B cell (primary cell): ENCODE measurements at regions of chr13 and their contacts with region 1.

Region 1: DNA sequence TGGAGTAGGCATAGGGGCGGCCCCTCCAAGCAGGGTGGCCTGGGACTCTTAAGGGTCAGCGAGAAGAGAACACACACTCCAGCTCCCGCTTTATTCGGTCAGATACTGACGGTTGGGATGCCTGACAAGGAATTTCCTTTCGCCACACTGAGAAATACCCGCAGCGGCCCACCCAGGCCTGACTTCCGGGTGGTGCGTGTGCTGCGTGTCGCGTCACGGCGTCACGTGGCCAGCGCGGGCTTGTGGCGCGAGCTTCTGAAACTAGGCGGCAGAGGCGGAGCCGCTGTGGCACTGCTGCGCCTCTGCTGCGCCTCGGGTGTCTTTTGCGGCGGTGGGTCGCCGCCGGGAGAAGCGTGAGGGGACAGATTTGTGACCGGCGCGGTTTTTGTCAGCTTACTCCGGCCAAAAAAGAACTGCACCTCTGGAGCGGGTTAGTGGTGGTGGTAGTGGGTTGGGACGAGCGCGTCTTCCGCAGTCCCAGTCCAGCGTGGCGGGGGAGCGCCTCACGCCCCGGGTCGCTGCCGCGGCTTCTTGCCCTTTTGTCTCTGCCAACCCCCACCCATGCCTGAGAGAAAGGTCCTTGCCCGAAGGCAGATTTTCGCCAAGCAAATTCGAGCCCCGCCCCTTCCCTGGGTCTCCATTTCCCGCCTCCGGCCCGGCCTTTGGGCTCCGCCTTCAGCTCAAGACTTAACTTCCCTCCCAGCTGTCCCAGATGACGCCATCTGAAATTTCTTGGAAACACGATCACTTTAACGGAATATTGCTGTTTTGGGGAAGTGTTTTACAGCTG is at the starts of genes BRCA2 and ZAR1L:
- DNase-seq: peak; percentile 94
- ATAC-seq: peak; percentile 90
- H3K4me3 ChIP-seq: peak within 1 kb of the TSS; percentile 74 to 91 (median 82)
- H3K4me3 Mint-ChIP-seq: peak within 1 kb of the TSS; percentile 91
- H3K27ac ChIP-seq: peak within 1 kb of the TSS; percentile 99 to 100
- H3K27ac Mint-ChIP-seq: peak within 1 kb of the TSS; percentile 99
- H3K4me1 ChIP-seq: peaks cover 7 to 20% of the 10 kb centered on the region in 2 donors
- H3K4me1 Mint-ChIP-seq: peaks cover 15% of the 10 kb centered on the region
- H3K27me3 ChIP-seq: no peaks in the 10 kb centered on the region
- H3K27me3 Mint-ChIP-seq: no peaks in the 10 kb centered on the region
- CTCF ChIP-seq: no peak
- total RNA-seq, gene BRCA2: 6.0 and 7.5 TPM in 2 replicates
- total RNA-seq, gene ZAR1L: not detected in 2 replicates

Region 2: DNA sequence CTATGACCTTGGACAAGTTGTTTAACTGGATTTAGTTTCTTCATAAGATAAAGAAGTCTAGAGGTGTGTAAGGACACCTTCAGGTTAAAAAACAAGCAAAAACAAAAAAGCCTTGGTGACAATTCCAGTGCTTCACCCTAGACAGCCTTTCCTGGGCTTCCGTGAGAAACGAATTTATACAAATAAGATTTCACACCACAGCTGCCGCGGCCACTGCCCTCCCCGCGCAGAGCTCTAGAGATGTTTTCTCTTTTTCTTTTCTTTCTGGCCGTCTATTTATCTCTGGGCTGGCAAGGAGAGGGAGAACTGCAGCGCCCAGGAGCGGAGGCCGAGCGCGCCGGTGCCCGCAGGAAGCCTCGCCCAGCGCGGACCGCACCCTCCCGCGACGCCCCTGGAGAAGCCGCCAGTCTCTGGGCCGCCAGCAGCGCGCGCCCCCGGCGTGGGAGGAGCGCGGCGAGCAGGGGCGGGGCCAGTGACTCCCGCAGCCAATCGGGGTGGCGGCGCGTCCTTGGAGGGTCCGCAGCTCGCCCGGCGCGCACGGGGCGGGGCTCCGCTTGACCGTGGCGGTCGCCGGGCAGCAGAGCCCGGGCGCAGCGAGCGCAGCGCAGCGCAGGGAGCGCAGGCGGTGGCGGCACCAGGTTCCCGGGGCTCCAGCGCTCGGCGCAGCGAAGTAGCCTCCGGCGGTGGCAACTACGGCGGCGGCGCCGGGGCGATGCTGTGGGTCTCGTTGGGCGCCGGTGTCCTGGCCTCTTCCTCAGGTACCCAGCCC is 469.1 kb before region 1 on chr13:
- CTCF ChIA-PET with region 1: no interaction called
- POLR2A ChIA-PET with region 1: no interaction called
- intact Hi-C with region 1: loop called (anchors 10 kb)
- DNase-seq: peak; percentile 76
- ATAC-seq: peak; percentile 98
- H3K4me3 ChIP-seq: peak overlapping the region; percentile 11 to 60 (median 48)
- H3K4me3 Mint-ChIP-seq: peak overlapping the region; percentile 91
- H3K27ac ChIP-seq: no peak overlapping the region
- H3K27ac Mint-ChIP-seq: peak overlapping the region; percentile 10
- H3K4me1 ChIP-seq: peaks cover 8 to 11% of the 10 kb centered on the region in 2 donors
- H3K4me1 Mint-ChIP-seq: peaks cover 19% of the 10 kb centered on the region
- H3K27me3 ChIP-seq: peaks cover 0 to 12% (median 11%) of the 10 kb centered on the region in 4 experiments
- H3K27me3 Mint-ChIP-seq: peaks cover 50% of the 10 kb centered on the region
- CTCF ChIP-seq: no peak

Region 3: DNA sequence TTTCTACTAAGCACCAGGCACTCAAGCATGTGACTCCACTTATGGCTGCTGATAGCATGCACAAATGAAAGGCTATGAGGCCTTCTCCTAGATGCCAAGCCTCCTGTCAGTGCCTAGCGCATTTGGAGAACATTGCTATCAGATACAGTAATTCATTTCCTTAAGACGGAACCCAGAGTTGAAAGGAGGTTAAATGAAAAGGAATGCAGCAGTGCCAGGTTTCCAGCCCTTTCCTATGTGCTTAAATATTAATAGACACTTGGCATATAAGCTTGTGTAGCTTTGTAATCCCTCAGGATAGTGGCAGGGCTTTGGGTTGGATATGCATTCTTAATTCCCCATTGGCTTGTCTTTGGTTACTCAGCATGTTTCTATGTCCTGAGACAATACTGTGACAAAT is 424.0 kb before region 1 on chr13:
- CTCF ChIA-PET with region 1: no interaction called
- POLR2A ChIA-PET with region 1: no interaction called
- intact Hi-C with region 1: no loop called
- DNase-seq: no peak
- ATAC-seq: no peak
- H3K4me3 ChIP-seq: no peak overlapping the region
- H3K4me3 Mint-ChIP-seq: no peak overlapping the region
- H3K27ac ChIP-seq: no peak overlapping the region
- H3K27ac Mint-ChIP-seq: no peak overlapping the region
- H3K4me1 ChIP-seq: peaks cover 6 to 7% of the 10 kb centered on the region in 2 donors
- H3K4me1 Mint-ChIP-seq: peaks cover 10% of the 10 kb centered on the region
- H3K27me3 ChIP-seq: peaks cover 0 to 2% (median 0%) of the 10 kb centered on the region in 4 experiments
- H3K27me3 Mint-ChIP-seq: no peaks in the 10 kb centered on the region
- CTCF ChIP-seq: no peak

Region 4: DNA sequence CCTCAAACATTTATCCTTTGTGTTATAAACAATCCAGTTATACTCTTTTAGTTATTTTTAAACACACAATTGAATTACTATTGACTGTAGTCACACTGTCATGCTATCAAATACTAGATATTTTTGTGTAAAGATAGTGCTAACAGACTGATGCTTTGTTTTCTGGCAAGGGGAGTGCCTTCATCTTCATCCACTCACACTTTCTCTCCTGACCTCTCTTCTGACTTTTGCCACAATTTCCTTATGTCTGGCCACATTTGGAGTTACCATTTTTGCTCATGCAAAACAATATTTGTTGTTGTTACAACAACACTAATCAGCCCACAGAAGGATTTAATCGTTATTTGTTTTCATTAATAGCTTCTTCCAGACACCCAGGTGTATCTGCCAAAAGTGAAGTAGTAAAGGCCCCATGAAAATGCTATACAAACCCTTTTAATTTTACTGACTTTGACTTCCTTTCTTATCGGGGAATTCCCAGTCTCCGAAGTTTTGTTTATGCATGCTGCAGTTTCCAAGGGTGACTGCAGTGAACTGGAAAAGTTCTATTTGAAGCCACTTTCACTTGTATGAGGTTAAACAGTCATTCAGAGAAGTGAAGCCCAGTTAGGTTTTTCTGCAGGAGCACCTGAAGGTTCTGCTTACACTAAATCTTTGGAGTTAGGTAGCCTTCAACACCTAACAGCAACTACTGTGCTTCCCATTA is 349.9 kb before region 1 on chr13:
- CTCF ChIA-PET with region 1: no interaction called
- POLR2A ChIA-PET with region 1: no interaction called
- intact Hi-C with region 1: loop called (anchors 5 kb)
- DNase-seq: peak; percentile 88
- ATAC-seq: peak; percentile 87
- H3K4me3 ChIP-seq: peak overlapping the region in 2 of 5 experiments; percentile 5 to 6
- H3K4me3 Mint-ChIP-seq: peak overlapping the region; percentile 52
- H3K27ac ChIP-seq: peak overlapping the region; percentile 86 to 99
- H3K27ac Mint-ChIP-seq: peak overlapping the region; percentile 86
- H3K4me1 ChIP-seq: peaks cover 28 to 30% of the 10 kb centered on the region in 2 donors
- H3K4me1 Mint-ChIP-seq: peaks cover 31% of the 10 kb centered on the region
- H3K27me3 ChIP-seq: no peaks in the 10 kb centered on the region
- H3K27me3 Mint-ChIP-seq: no peaks in the 10 kb centered on the region
- CTCF ChIP-seq: no peak

Region 5: GRCh38 chr13:32427852-32428580 is 112.6 kb after region 1 on chr13 and contains the start of gene N4BP2L1:
- CTCF ChIA-PET with region 1: interaction called, 14 read pairs
- POLR2A ChIA-PET with region 1: interaction called, 17 read pairs
- intact Hi-C with region 1: loop called (anchors 1 kb)
- DNase-seq: peak; percentile 93
- ATAC-seq: peak; percentile 74
- H3K4me3 ChIP-seq: peak within 1 kb of the TSS; percentile 73 to 93 (median 80)
- H3K4me3 Mint-ChIP-seq: peak within 1 kb of the TSS; percentile 88
- H3K27ac ChIP-seq: peak within 1 kb of the TSS; percentile 95 to 98
- H3K27ac Mint-ChIP-seq: peak within 1 kb of the TSS; percentile 96
- H3K4me1 ChIP-seq: peaks cover 28 to 47% of the 10 kb centered on the region in 2 donors
- H3K4me1 Mint-ChIP-seq: peaks cover 48% of the 10 kb centered on the region
- H3K27me3 ChIP-seq: no peaks in the 10 kb centered on the region
- H3K27me3 Mint-ChIP-seq: no peaks in the 10 kb centered on the region
- CTCF ChIP-seq: no peak
- total RNA-seq, gene N4BP2L1: 52.8 and 59.0 TPM in 2 replicates

Region 6: DNA sequence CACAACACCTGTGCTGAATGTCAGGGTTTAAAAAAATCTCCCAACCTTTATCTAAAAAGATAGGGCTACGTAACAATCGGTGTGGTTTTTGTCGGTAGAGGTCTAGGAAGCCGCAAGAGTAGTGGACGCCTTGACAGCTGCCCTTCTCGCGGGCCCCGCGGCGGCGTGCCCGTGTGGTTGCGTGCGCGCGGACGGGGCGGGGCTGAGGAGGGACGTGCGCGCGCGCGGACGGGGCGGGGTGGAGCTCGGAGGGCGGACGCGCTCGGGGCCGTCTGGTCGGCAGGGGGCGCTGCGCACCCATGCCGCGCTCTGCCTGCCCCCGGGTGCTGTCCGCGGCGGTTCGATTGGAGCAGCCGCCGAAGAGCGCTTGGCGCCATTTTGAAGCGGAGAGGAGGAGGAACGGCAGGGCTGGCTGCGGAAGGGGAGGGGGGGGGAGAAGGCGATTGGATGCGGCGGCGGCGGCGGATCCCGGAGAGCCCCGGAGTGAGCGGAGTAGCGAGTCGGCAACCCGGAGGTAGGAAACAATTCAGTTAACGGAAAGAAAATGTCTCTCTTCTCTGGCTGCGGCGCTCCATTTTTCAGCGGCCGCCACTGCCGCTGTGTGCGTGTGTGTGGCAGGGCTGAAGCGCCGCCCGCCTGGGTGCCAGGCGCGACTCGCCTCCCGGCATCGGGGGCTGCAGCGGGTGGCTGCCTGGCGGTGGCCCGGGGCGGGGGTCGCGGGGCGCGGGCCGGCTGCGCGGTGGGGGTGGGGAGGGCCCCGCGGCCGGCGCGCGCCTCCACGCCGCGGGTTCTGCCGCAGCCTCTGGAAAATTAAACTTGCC is 270.9 kb after region 1 on chr13 and contains the start of gene PDS5B:
- CTCF ChIA-PET with region 1: interaction called, 7 read pairs
- POLR2A ChIA-PET with region 1: interaction called, 4 read pairs
- intact Hi-C with region 1: loop called (anchors 1 kb)
- DNase-seq: peak; percentile 97
- ATAC-seq: peak; percentile 85
- H3K4me3 ChIP-seq: peak within 1 kb of the TSS; percentile 72 to 96 (median 81)
- H3K4me3 Mint-ChIP-seq: peak within 1 kb of the TSS; percentile 95
- H3K27ac ChIP-seq: peak within 1 kb of the TSS; percentile 69 to 83
- H3K27ac Mint-ChIP-seq: peak within 1 kb of the TSS; percentile 91
- H3K4me1 ChIP-seq: peaks cover 20 to 23% of the 10 kb centered on the region in 2 donors
- H3K4me1 Mint-ChIP-seq: peaks cover 39% of the 10 kb centered on the region
- H3K27me3 ChIP-seq: peaks cover 0 to 6% (median 0%) of the 10 kb centered on the region in 4 experiments
- H3K27me3 Mint-ChIP-seq: no peaks in the 10 kb centered on the region
- CTCF ChIP-seq: peak; percentile 81
- total RNA-seq, gene PDS5B: 62.9 and 66.2 TPM in 2 replicates

Region 7: GRCh38 chr13:32650705-32651311 is 335.4 kb after region 1 on chr13:
- CTCF ChIA-PET with region 1: no interaction called
- POLR2A ChIA-PET with region 1: no interaction called
- intact Hi-C with region 1: loop called (anchors 5 kb)
- DNase-seq: peak; percentile 71
- ATAC-seq: peak; percentile 74
- H3K4me3 ChIP-seq: no peak overlapping the region
- H3K4me3 Mint-ChIP-seq: no peak overlapping the region
- H3K27ac ChIP-seq: no peak overlapping the region
- H3K27ac Mint-ChIP-seq: no peak overlapping the region
- H3K4me1 ChIP-seq: peaks cover 26 to 38% of the 10 kb centered on the region in 2 donors
- H3K4me1 Mint-ChIP-seq: peaks cover 53% of the 10 kb centered on the region
- H3K27me3 ChIP-seq: no peaks in the 10 kb centered on the region
- H3K27me3 Mint-ChIP-seq: no peaks in the 10 kb centered on the region
- CTCF ChIP-seq: peak; percentile 89